Activated CD4-positive, alpha-beta memory T cell treated with anti-CD3 and anti-CD28 coated beads for 36 hours (primary cell): ENCODE measurements at regions of chr1 and their contacts with region 1.

Region 1: GRCh38 chr1:225441314-225442122 is 13.7 kb upstream of the LBR start:
- DNase-seq: no peak
- H3K4me3 Mint-ChIP-seq: no peak overlapping the region
- H3K27ac Mint-ChIP-seq: peak overlapping the region; percentile 64
- H3K4me1 Mint-ChIP-seq: peaks cover 46% of the 10 kb centered on the region
- H3K27me3 Mint-ChIP-seq: no peaks in the 10 kb centered on the region

Region 2: DNA sequence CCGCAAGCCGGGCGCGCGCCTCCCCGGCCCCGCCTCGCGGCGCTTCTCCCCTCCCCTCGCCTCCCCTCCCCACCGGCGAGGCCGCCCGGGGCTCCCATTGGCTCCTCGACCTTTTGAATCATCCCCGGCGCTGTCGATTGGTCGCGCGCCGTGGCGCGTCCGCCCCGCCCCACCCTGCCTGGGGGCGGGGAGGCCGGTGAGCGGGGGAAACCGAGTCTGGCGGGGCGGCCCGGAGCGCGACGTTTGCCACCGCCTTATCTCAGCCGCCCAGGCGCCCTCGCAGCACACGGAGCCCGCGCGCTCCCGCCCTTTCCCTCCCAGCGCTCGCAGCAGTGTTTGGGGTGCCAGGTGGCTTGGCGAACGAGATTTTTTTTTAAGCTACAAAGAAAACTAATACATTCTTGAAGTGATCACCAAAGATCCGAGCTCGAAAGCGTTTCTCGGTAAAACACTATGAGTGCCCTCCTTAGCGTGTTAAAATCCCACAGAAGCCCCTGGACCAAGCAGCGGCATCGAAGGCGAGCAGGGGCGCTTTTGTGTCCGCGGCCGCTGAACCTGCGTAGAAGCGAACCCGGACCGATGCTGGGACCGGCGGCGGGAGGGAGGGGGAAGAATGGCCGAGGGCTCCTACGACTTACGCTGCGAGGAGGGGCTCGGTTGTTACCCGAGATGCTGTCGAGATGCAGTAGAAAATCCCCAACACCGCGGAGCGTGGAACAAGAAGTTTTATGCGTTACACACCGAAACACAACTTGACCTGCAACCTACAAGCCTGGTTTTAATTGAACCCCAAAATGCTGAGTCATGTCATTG is 13.2 kb before region 1 on chr1:
- CTCF ChIA-PET with region 1: interaction called, 14 read pairs
- POLR2A ChIA-PET with region 1: interaction called, 32 read pairs
- intact Hi-C with region 1: loop called (anchors 1 kb)
- DNase-seq: peak; percentile 95
- H3K4me3 Mint-ChIP-seq: peak overlapping the region; percentile 89
- H3K27ac Mint-ChIP-seq: peak overlapping the region; percentile 97
- H3K4me1 Mint-ChIP-seq: peaks cover 44% of the 10 kb centered on the region
- H3K27me3 Mint-ChIP-seq: no peaks in the 10 kb centered on the region

Region 3: GRCh38 chr1:225454733-225455132 is 13.2 kb after region 1 on chr1:
- CTCF ChIA-PET with region 1: interaction called, 15 read pairs
- POLR2A ChIA-PET with region 1: interaction called, 21 read pairs
- intact Hi-C with region 1: loop called (anchors 1 kb)
- DNase-seq: peak; percentile 91
- H3K4me3 Mint-ChIP-seq: peak overlapping the region; percentile 16
- H3K27ac Mint-ChIP-seq: peak overlapping the region; percentile 73
- H3K4me1 Mint-ChIP-seq: peaks cover 39% of the 10 kb centered on the region
- H3K27me3 Mint-ChIP-seq: no peaks in the 10 kb centered on the region

Region 4: DNA sequence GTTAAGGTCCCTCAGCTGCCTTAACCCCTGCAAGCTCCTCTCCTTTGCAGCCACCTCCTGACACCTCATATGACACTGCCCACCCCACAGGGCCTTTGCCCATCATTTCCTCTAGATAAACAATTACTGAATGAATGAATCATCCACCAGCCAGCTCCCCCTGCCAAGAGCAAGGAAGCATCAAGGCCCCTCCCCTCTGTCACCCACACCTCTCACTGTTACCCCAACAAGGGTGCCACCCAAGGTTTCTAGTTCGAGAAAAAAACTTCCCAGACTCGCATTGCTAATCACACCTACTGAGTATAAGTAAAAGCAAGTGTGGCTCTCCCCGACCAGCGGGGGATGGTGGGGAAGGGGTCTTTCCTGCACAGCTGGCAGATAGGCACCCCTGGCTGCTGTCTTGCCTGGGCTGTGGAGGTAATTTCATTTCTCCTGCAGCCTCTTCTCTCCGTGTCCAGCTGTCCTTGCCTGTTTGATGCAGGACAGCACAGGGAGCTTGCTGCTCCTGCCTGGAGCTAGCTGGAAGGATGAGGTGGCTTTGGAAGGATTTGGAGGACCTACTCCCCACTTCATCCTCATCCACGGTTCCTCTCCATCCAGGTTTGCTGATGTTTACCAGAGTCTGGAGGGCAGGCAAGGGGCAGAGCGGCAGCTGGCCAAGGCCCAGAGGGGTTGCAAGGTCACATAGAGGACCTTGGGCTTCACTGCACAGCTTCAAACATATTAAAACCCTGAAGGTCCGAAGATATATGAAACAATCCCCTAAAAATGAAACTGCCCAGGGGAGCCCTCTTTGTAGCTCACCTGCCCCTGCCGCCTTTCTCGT is 19.4 kb after region 1 on chr1:
- CTCF ChIA-PET with region 1: interaction called, 7 read pairs
- POLR2A ChIA-PET with region 1: interaction called, 12 read pairs
- intact Hi-C with region 1: loop called (anchors 1 kb)
- DNase-seq: peak; percentile 75
- H3K4me3 Mint-ChIP-seq: no peak overlapping the region
- H3K27ac Mint-ChIP-seq: peak overlapping the region; percentile 23
- H3K4me1 Mint-ChIP-seq: peaks cover 35% of the 10 kb centered on the region
- H3K27me3 Mint-ChIP-seq: no peaks in the 10 kb centered on the region